ENCODE measurements at regions of chr21 and their contacts with region 1.

Region 1: DNA sequence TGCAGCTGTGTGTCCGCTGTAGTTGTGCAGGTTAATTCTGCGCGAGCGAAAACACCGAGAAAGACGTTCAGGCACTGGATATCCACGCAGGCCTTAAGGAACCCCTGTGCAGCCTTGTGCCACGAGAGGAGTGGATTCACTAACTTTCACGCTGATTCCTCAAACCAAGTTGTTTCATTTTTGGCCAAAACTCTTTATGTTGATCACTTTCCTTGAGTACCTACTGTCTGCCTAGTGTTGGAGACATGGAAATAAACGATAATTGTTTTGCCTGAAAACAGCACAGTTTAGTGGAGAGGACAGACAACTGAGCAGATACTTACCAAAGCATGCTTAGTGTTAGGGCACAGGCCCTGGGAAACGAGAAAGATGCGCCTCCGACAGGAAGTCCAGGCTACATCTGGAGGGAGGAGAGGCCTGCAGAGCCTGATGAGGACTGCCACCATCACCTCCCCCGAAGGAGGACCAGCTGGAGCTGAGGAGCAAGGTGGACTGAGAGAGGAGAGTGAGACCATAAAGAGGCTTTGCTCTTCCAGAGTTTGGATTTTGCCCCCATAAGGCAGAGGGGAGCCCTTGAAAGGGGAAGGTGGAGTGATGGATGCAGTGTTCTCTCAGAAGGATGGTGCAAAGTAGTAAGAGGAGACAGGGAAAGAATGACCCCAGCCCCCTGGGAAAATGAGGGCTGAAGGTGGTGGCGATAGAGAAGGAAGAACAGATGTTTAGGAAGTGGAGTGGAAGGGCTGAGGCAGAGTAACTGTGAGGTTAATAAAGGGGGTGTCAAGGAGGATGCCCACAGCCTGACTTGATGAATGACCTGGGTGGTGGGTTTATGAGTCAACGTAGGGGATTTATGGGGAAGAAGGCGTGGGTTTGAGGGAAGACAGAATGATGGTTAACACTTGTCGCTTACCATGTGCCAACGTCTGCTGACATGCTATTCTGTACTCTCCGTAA is 956 bp upstream of the SCAF4 start:
- DNase-seq: no peak
- H3K4me3 ChIP-seq: peak overlapping the region; percentile 98
- H3K27ac ChIP-seq: peak overlapping the region; percentile 96
- H3K4me1 ChIP-seq: peaks cover 28% of the 10 kb centered on the region
- H3K27me3 ChIP-seq: no peaks in the 10 kb centered on the region
- CTCF ChIP-seq: no peak

Region 2: DNA sequence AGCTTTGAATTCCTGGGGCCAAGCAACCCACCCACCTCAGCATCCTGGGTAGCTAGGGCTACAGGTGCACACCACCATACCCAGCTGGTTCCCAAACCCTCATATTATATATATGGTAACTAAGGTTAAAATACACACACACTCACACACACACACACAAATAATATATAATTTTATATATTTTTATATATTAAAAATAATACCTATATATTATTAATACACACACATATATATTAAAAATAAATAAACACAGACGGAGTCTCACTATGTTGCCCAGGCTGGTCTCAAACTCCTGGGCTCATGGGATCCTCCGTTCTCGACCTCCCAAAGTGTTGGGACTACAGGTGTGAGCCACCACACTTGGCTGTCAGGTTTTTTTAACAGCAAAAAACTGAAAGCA is 32.8 kb before region 1 on chr21:
- CTCF ChIA-PET with region 1: no interaction called
- POLR2A ChIA-PET with region 1: interaction called, 10 read pairs
- intact Hi-C with region 1: no loop called
- DNase-seq: no peak
- H3K4me3 ChIP-seq: no peak overlapping the region
- H3K27ac ChIP-seq: no peak overlapping the region
- H3K4me1 ChIP-seq: no peaks in the 10 kb centered on the region
- H3K27me3 ChIP-seq: no peaks in the 10 kb centered on the region
- CTCF ChIP-seq: no peak

Measured in A673 (cell line).